ENCODE measurements at regions of chr7 and their contacts with region 1.

Region 1: DNA sequence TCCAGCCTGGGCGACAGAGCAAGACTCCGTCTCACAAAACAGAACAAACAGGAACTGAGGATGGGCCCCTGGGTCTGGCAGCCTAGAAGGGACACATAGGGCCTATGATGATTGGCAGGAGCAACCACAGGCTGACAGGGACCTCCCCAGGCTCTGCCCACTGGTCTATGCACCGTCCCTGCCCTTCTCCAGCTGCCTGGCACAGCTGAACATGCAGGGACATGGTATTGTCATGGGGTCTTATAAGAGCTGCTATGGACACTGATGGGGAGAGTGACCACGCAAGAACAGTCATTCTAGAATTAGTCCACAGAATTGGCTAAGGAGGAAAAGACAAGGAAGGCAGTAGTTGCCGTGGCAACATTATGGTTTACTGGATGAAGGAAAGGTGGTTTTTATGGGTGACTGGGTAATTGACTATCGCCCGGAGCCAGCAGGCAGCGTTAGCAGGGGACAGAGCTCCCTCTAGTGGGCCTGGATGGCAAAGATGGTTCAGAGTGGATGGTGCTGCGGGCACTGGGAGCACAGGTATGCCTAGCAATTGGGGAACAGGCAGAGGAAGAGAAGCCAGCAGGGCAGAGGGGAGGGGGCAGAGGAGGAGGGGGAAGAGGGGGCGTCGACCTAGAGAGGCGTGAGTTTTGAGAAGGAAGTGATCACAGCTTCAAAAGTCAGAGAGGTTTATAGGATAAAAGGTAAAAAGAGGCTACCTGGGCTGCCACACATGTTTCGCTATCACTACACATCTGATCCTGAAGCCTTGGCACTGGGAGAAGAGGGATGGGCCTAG is 7.8 kb upstream of the TRIM56 start:
- DNase-seq: peak; percentile 90
- H3K4me3 Mint-ChIP-seq: no peak overlapping the region
- H3K27ac Mint-ChIP-seq: no peak overlapping the region
- H3K4me1 Mint-ChIP-seq: peaks cover 4% of the 10 kb centered on the region
- H3K27me3 Mint-ChIP-seq: no peaks in the 10 kb centered on the region

Region 2: DNA sequence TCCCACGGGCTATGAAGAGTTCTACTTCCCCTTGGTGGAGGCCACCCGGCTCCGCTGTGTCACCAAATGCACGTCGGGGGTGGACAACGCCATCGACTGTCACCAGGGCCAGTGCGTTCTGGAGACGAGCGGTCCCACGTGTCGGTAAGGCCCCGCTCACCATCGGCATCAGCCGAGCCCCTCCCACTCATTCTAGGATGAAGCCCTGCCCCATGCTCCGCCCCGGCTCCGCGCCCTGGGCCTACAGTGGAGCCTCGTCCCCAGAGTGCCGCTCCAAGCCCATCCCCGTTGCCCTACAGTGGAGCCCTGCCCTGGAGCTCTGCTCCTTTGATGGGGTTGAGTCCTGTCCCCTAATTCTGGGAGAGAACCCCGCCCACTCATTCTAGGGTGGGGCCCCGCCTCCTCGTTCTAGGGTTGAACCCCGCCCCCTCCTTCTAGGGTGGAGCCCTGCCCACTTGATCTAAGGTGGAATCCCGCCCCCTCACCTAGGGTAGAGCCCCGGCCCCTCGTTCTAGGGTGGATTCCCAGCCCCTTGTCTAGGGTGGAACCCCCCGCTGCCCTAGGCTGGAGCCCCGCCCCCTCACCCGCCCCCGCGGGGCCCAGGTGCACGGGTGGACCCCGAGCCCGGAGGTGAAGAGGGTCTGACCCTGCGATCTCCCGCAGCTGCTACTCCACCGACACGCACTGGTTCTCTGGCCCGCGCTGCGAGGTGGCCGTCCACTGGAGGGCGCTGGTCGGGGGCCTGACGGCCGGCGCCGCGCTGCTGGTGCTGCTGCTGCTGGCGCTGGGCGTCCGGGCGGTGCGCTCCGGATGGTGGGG is 111.6 kb before region 1 on chr7:
- CTCF ChIA-PET with region 1: no interaction called
- POLR2A ChIA-PET with region 1: no interaction called
- intact Hi-C with region 1: loop called (anchors 5 kb)
- DNase-seq: peak; percentile 90
- H3K4me3 Mint-ChIP-seq: peak overlapping the region; percentile 43
- H3K27ac Mint-ChIP-seq: no peak overlapping the region
- H3K4me1 Mint-ChIP-seq: peaks cover 15% of the 10 kb centered on the region
- H3K27me3 Mint-ChIP-seq: peaks cover 45% of the 10 kb centered on the region

Region 3: DNA sequence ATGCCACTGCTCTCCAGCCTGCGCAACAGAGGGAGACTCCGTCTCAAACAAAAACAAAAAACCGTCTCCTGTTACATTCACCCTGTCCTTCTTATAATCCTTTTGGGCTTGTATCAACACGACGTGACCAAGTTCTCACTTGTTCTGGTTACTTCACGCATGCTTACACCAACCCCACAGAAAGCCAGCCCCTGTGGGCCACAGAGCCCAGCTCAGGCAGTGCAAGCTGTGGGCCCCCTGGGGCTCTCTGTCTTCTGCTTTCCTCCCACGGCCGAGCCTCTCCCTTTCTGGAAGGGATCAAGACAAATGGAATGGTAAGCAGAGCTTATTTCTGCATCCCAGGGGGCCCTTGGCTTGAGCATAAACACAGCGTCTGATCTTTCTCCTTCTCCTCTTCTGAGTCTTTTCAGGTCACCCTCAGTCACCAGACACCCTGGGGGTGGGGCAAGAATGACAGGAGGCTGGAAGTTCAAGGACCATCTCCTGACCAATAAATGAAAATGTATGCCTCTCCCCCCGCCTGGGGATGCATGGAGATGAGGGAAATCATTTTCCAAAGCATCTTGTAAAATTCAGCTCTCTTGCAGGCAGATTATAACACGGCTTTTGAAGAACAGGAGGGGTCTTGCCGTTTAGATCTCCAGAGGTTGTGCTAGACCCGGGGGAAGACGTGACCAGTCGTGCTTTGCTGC is 11.2 kb before region 1 on chr7:
- CTCF ChIA-PET with region 1: interaction called, 10 read pairs
- POLR2A ChIA-PET with region 1: no interaction called
- intact Hi-C with region 1: no loop called
- DNase-seq: no peak
- H3K4me3 Mint-ChIP-seq: no peak overlapping the region
- H3K27ac Mint-ChIP-seq: no peak overlapping the region
- H3K4me1 Mint-ChIP-seq: no peaks in the 10 kb centered on the region
- H3K27me3 Mint-ChIP-seq: peaks cover 28% of the 10 kb centered on the region

Measured in activated CD4-positive, alpha-beta memory T cell treated with anti-CD3 and anti-CD28 coated beads for 36 hours (primary cell).